CD8-positive, alpha-beta T cell (primary cell): ENCODE measurements at regions of chr10 and their contacts with region 1.

Region 1: DNA sequence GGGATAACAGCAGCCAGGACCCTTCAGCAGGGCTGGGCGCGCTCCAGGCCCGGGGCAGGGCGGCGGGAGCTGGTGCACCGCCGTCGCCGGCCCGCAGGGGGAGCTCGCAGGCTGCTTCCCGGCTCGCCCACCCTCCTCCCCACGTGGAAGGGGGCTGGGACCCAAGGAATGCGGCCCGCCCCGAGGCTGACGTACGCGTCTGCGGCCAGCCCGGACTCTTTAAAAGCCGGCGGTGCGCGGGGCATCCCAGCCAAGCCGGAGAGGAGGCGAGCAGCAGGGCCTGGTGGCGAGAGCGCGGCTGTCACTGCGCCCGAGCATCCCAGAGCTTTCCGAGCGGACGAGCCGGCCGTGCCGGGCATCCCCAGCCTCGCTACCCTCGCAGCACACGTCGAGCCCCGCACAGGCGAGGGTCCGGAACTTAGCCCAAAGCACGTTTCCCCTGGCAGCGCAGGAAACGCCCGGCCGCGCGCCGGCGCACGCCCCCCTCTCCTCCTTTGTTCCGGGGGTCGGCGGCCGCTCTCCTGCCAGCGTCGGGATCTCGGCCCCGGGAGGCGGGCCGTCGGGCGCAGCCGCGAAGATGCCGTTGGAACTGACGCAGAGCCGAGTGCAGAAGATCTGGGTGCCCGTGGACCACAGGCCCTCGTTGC is at the start of gene PFKFB3:
- DNase-seq: peak; percentile 76 to 96 (median 91)
- ATAC-seq: peak; percentile 62
- H3K4me3 ChIP-seq: peak within 1 kb of the TSS; percentile 54 to 61
- H3K4me3 Mint-ChIP-seq: peak within 1 kb of the TSS; percentile 99
- H3K27ac ChIP-seq: peak within 1 kb of the TSS; percentile 29 to 68
- H3K27ac Mint-ChIP-seq: peak within 1 kb of the TSS; percentile 94
- H3K4me1 ChIP-seq: peaks cover 18% of the 10 kb centered on the region
- H3K4me1 Mint-ChIP-seq: peaks cover 26% of the 10 kb centered on the region
- H3K27me3 ChIP-seq: no peaks in the 10 kb centered on the region
- H3K27me3 Mint-ChIP-seq: no peaks in the 10 kb centered on the region
- CTCF ChIP-seq: peak; percentile 94
- total RNA-seq, gene PFKFB3: 221 to 233 TPM

Region 2: GRCh38 chr10:5977471-5978229 is 225.2 kb before region 1 on chr10 and contains the start of gene IL15RA:
- CTCF ChIA-PET with region 1: no interaction called
- POLR2A ChIA-PET with region 1: no interaction called
- intact Hi-C with region 1: loop called in 1 of 2 experiments (anchors 5 kb)
- DNase-seq: peak; percentile 54 to 91 (median 84)
- ATAC-seq: peak; percentile 78
- H3K4me3 ChIP-seq: peak within 1 kb of the TSS; percentile 92 to 95
- H3K4me3 Mint-ChIP-seq: peak within 1 kb of the TSS; percentile 97
- H3K27ac ChIP-seq: peak within 1 kb of the TSS; percentile 77 to 82
- H3K27ac Mint-ChIP-seq: peak within 1 kb of the TSS; percentile 96
- H3K4me1 ChIP-seq: peaks cover 12% of the 10 kb centered on the region
- H3K4me1 Mint-ChIP-seq: peaks cover 24% of the 10 kb centered on the region
- H3K27me3 ChIP-seq: no peaks in the 10 kb centered on the region
- H3K27me3 Mint-ChIP-seq: no peaks in the 10 kb centered on the region
- CTCF ChIP-seq: no peak
- total RNA-seq, gene IL15RA: 4.8 to 5.4 TPM

Region 3: GRCh38 chr10:6144406-6145165 is 58.2 kb before region 1 on chr10:
- CTCF ChIA-PET with region 1: interaction called, 7 read pairs
- POLR2A ChIA-PET with region 1: interaction called, 6 read pairs
- intact Hi-C with region 1: loop called (anchors 1 kb)
- DNase-seq: peak; percentile 73 to 93 (median 87)
- ATAC-seq: peak; percentile 90
- H3K4me3 ChIP-seq: peak overlapping the region; percentile 76 to 89
- H3K4me3 Mint-ChIP-seq: peak overlapping the region; percentile 84
- H3K27ac ChIP-seq: peak overlapping the region; percentile 71 to 75
- H3K27ac Mint-ChIP-seq: peak overlapping the region; percentile 83
- H3K4me1 ChIP-seq: peaks cover 54% of the 10 kb centered on the region
- H3K4me1 Mint-ChIP-seq: peaks cover 56% of the 10 kb centered on the region
- H3K27me3 ChIP-seq: no peaks in the 10 kb centered on the region
- H3K27me3 Mint-ChIP-seq: peaks cover 4% of the 10 kb centered on the region
- CTCF ChIP-seq: no peak

Region 4: GRCh38 chr10:6171881-6172695 is 30.7 kb before region 1 on chr10:
- CTCF ChIA-PET with region 1: interaction called, 34 read pairs
- POLR2A ChIA-PET with region 1: interaction called, 26 read pairs
- intact Hi-C with region 1: loop called (anchors 1 to 2 kb)
- DNase-seq: peak in 1 of 9 experiments; percentile 44
- ATAC-seq: no peak
- H3K4me3 ChIP-seq: no peak overlapping the region
- H3K4me3 Mint-ChIP-seq: no peak overlapping the region
- H3K27ac ChIP-seq: no peak overlapping the region
- H3K27ac Mint-ChIP-seq: peak overlapping the region; percentile 85
- H3K4me1 ChIP-seq: peaks cover 49% of the 10 kb centered on the region
- H3K4me1 Mint-ChIP-seq: peaks cover 83% of the 10 kb centered on the region
- H3K27me3 ChIP-seq: no peaks in the 10 kb centered on the region
- H3K27me3 Mint-ChIP-seq: no peaks in the 10 kb centered on the region
- CTCF ChIP-seq: no peak

Region 5: GRCh38 chr10:6275022-6275997 is 72.5 kb after region 1 on chr10:
- CTCF ChIA-PET with region 1: interaction called, 4 read pairs
- POLR2A ChIA-PET with region 1: interaction called, 7 read pairs
- intact Hi-C with region 1: loop called (anchors 2 to 5 kb)
- DNase-seq: peak; percentile 73 to 97 (median 84)
- ATAC-seq: peak; percentile 86
- H3K4me3 ChIP-seq: peak overlapping the region in 1 of 2 experiments; percentile 37
- H3K4me3 Mint-ChIP-seq: peak overlapping the region; percentile 61
- H3K27ac ChIP-seq: peak overlapping the region; percentile 39 to 86
- H3K27ac Mint-ChIP-seq: peak overlapping the region; percentile 92
- H3K4me1 ChIP-seq: peaks cover 31% of the 10 kb centered on the region
- H3K4me1 Mint-ChIP-seq: peaks cover 42% of the 10 kb centered on the region
- H3K27me3 ChIP-seq: no peaks in the 10 kb centered on the region
- H3K27me3 Mint-ChIP-seq: no peaks in the 10 kb centered on the region
- CTCF ChIP-seq: no peak

Region 6: DNA sequence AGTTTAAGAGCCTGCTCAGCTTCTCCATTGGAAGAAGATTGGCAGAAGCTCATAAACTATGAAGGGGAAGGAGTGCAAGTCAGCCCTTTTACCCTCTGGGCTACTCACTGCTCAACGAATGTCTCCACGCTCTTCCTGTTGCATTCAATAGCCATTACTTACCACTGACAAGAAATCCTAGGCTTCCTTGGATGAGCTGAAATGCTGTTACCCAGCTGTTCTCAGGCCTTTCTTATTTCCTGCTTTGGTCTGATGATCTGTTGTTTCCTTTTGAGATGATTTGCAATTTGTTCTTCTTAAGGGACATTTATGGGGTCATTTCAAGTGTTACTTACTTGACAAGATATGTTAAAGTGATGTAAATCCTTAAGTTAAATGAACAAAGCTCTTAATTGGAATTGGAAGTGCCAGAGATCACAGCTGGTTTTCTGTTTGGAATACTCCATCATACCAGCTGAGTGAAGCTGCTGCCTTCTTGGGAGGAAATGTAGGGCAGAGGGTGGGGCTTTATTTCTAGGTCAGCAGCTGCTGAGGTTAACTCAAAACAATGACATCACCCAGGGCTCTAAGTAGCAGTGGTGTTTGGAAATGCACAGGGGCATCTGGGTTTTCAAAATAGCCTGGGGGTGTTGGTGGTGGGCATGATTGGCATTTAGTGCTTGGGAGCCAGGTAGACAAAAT is 207.3 kb after region 1 on chr10:
- CTCF ChIA-PET with region 1: interaction called, 50 read pairs
- POLR2A ChIA-PET with region 1: interaction called, 19 read pairs
- intact Hi-C with region 1: no loop called
- DNase-seq: peak in 8 of 9 experiments; percentile 15 to 87 (median 56)
- ATAC-seq: peak; percentile 93
- H3K4me3 ChIP-seq: peak overlapping the region in 1 of 2 experiments; percentile 18
- H3K4me3 Mint-ChIP-seq: peak overlapping the region; percentile 43
- H3K27ac ChIP-seq: peak overlapping the region; percentile 42 to 89
- H3K27ac Mint-ChIP-seq: peak overlapping the region; percentile 95
- H3K4me1 ChIP-seq: peaks cover 17% of the 10 kb centered on the region
- H3K4me1 Mint-ChIP-seq: peaks cover 38% of the 10 kb centered on the region
- H3K27me3 ChIP-seq: no peaks in the 10 kb centered on the region
- H3K27me3 Mint-ChIP-seq: no peaks in the 10 kb centered on the region
- CTCF ChIP-seq: no peak

Region 7: DNA sequence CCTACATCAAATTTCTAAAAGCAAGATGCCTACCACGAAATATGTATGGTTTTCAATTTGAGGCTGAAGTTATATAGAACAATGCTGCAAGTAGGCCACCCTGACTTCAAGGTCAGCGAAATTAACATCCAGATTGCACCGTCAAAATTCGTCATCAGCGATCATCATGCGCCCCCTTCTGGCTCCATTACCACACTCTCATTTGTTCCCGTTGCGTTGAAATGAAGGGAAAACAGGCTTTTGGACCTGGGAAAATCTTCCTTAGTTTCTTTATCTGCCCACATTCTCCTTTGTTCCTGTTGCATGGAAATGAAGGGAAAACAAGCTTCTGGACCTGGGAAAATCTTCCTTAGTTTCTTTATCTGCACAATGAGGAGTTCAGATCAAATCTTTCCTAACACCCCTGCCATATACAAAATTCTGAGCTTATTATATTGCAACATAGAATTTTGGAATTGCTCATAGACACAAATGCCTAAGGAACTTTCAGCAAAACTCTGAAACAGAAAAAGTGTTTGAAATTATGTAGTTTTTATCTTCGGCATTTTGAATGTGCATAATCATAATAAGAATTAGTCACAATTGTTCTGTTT is 475.5 kb after region 1 on chr10:
- CTCF ChIA-PET with region 1: interaction called, 5 read pairs
- POLR2A ChIA-PET with region 1: no interaction called
- intact Hi-C with region 1: loop called (anchors 10 kb)
- DNase-seq: peak; percentile 23 to 78 (median 68)
- ATAC-seq: peak; percentile 52
- H3K4me3 ChIP-seq: no peak overlapping the region
- H3K4me3 Mint-ChIP-seq: no peak overlapping the region
- H3K27ac ChIP-seq: no peak overlapping the region
- H3K27ac Mint-ChIP-seq: no peak overlapping the region
- H3K4me1 ChIP-seq: no peaks in the 10 kb centered on the region
- H3K4me1 Mint-ChIP-seq: peaks cover 4% of the 10 kb centered on the region
- H3K27me3 ChIP-seq: no peaks in the 10 kb centered on the region
- H3K27me3 Mint-ChIP-seq: no peaks in the 10 kb centered on the region
- CTCF ChIP-seq: peak; percentile 71

Region 8: GRCh38 chr10:6811153-6811552 is 608.3 kb after region 1 on chr10:
- CTCF ChIA-PET with region 1: no interaction called
- POLR2A ChIA-PET with region 1: no interaction called
- intact Hi-C with region 1: no loop called
- DNase-seq: no peak
- ATAC-seq: no peak
- H3K4me3 ChIP-seq: no peak overlapping the region
- H3K4me3 Mint-ChIP-seq: no peak overlapping the region
- H3K27ac ChIP-seq: no peak overlapping the region
- H3K27ac Mint-ChIP-seq: no peak overlapping the region
- H3K4me1 ChIP-seq: no peaks in the 10 kb centered on the region
- H3K4me1 Mint-ChIP-seq: no peaks in the 10 kb centered on the region
- H3K27me3 ChIP-seq: peaks cover 3 to 4% of the 10 kb centered on the region in 2 experiments
- H3K27me3 Mint-ChIP-seq: peaks cover 20% of the 10 kb centered on the region
- CTCF ChIP-seq: no peak